Activated T-helper 1 cell treated with anti-CD3 and anti-CD28 coated beads, Interleukin-12 subunit alpha, Interleukin-12 subunit beta, Interleukin-2, Interleukin-4 antibody, amounts not matched to agents 30 ng/mL and 10 ng/mL and 1 ng/mL, durations not matched to agents 14 hours and 24 hours and 36 hours (primary cell): ENCODE measurements at regions of chr9 and their contacts with region 1.

Region 1: GRCh38 chr9:96854073-96854876 is at the start of gene ZNF782:
- DNase-seq: peak; percentile 81
- H3K4me3 Mint-ChIP-seq: peak within 1 kb of the TSS; percentile 100
- H3K27ac Mint-ChIP-seq: peak within 1 kb of the TSS; percentile 99
- H3K4me1 Mint-ChIP-seq: peaks cover 43% of the 10 kb centered on the region
- H3K27me3 Mint-ChIP-seq: peaks cover 21% of the 10 kb centered on the region
- total RNA-seq, gene ZNF782: 3.8 and 4.4 TPM in 2 replicates

Region 2: GRCh38 chr9:96418074-96418809 is 436.0 kb before region 1 on chr9 and contains the start of gene ZNF367:
- intact Hi-C with region 1: loop called (anchors 2 kb)
- DNase-seq: peak; percentile 93
- H3K4me3 Mint-ChIP-seq: peak within 1 kb of the TSS; percentile 94
- H3K27ac Mint-ChIP-seq: peak within 1 kb of the TSS; percentile 95
- H3K4me1 Mint-ChIP-seq: peaks cover 43% of the 10 kb centered on the region
- H3K27me3 Mint-ChIP-seq: no peaks in the 10 kb centered on the region
- total RNA-seq, gene ZNF367: 21.8 and 22.0 TPM in 2 replicates

Region 3: DNA sequence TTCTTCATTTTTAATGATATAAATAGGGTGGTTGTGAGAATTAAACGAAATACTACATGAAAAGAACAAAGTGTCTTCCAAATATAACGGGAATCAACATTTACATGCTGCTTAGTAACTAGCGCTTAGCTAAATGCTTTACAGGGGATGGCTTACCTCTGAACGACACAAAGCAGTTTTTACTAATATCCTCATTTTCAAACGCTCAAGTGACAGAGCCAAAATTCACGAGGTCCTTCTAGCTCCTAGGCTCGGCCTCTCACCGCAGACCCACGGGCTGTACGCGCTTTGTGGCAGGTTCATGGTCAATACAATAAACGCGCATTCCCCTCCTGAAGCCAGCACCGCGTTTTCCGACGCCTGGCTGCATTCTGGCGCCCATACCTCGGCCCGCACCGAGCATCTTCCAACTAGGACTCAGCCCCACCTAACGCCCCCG is 76.8 kb before region 1 on chr9:
- intact Hi-C with region 1: loop called (anchors 1 kb)
- DNase-seq: no peak
- H3K4me3 Mint-ChIP-seq: peak overlapping the region; percentile 100
- H3K27ac Mint-ChIP-seq: peak overlapping the region; percentile 93
- H3K4me1 Mint-ChIP-seq: peaks cover 19% of the 10 kb centered on the region
- H3K27me3 Mint-ChIP-seq: peaks cover 2% of the 10 kb centered on the region

Region 4: DNA sequence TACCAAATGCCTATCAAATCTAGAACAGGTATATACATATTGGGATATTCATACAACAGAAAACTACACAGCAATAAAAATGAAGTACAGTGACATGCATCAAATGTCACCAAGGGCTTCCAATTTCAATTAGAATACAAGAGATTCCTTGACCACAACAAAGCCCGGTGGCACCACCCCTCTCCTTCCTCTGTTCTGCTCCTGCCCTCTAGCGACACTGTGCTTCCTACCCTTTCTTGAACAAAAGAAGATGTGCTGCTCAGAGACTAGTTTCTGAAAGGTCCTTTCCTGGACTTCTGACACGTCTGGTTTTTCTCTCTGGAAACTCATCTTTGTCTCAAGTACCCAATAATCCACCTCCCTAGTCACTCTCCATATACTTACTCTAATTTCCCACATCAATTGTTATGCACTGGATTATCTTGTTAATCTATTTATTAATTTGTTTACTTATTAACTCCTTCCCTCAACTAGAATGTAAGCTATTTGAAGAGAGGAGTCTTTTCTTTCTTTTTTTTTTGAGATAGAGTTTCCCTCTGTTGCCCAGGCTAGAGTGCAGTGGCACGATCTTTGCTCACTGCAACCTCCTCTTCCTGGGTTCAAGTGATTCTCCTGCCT is 255.0 kb after region 1 on chr9:
- intact Hi-C with region 1: loop called (anchors 1 kb)
- DNase-seq: peak; percentile 8
- H3K4me3 Mint-ChIP-seq: no peak overlapping the region
- H3K27ac Mint-ChIP-seq: no peak overlapping the region
- H3K4me1 Mint-ChIP-seq: no peaks in the 10 kb centered on the region
- H3K27me3 Mint-ChIP-seq: peaks cover 4% of the 10 kb centered on the region

Region 5: DNA sequence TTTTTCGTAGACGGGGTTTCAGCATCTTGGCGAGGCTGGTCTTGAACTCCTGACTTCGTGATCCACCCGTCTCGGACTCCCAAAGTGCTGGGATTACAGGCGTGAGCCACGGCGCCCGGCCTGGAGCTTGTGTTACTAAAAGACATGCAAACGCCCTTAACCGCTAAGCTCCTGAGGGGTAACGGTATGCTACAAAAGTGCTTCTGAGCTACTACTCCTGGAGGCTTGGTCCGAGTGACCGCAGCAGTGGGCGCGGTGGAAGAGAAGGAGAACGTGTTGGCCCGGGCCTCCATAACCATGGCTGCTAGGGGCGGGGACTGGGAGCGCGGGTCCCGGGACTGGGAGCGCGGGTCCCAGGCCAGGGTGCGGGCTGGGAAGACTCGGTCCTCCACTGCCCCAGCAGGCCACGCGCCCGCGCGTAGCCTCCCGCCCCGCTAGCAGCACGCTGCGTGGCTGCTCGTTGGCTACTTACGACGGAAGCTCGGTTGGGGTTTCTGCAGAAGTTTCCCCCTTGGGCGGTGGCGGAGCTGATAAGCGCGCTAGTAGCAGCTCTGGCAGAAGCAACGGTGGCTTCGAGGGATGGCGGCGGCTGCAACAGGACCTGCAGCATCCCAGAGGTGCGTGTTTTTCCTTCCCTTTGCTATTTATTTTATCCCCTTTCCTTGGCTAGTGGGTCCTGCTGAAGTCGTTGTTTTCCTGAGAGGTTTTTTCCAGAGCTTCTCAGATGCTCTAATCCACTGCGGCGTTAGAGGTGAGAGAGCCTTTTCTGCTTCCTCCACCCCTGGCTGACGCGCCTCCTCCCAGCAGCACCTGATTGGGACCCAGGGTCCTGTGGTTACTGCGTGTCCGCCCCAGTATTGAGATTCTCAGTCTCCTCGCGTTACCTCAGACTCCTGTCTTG is 383.9 kb after region 1 on chr9:
- intact Hi-C with region 1: loop called (anchors 1 kb)
- DNase-seq: peak; percentile 67
- H3K4me3 Mint-ChIP-seq: peak overlapping the region; percentile 87
- H3K27ac Mint-ChIP-seq: peak overlapping the region; percentile 92
- H3K4me1 Mint-ChIP-seq: peaks cover 18% of the 10 kb centered on the region
- H3K27me3 Mint-ChIP-seq: peaks cover 17% of the 10 kb centered on the region

Region 6: DNA sequence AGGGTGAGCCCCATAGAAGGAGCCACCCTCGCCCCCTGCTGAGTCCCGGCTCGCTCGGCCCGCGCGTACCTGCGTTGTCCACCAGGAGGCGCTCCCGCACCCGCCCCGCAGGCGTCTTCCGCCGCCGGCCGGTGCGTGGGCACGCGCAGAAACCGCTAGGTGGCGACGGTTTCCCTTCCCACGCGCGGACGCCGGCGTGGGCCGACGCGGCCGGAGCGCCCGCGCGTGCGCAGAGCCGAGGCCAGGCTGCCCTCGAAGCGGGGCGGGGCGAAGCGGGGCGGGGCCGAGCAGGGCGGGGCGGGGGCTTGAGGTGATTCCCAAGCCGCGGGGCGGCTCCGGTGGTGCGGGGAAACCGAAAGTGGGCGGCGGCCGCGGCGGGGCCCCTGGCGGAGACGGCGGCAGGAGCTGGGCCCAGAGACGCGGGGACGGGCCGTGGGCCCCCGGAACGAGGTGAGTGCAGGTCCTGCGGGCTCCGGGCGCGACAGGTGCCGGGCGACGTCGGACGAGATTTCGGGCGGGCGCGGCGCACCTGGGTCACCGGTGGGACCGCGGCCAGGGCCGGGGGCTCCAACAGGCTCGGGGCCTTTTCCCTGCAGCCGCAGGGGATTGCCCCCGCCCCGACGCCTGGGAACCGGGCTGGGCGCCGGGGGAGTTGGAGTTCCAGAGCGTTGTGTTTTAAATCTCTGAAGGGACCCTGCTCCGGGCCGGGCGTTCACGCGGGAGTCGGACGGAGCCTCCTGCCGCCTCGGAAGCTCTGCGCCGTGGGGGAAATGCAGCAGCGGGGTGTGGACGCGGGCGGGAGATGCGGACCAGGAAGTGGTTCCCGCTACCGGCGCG is 557.7 kb after region 1 on chr9 and contains the start of gene TDRD7:
- intact Hi-C with region 1: loop called (anchors 2 kb)
- DNase-seq: peak; percentile 87
- H3K4me3 Mint-ChIP-seq: peak within 1 kb of the TSS; percentile 84
- H3K27ac Mint-ChIP-seq: peak within 1 kb of the TSS; percentile 61
- H3K4me1 Mint-ChIP-seq: peaks cover 35% of the 10 kb centered on the region
- H3K27me3 Mint-ChIP-seq: peaks cover 34% of the 10 kb centered on the region
- total RNA-seq, gene TDRD7: 4.7 TPM in 2 replicates

Region 7: DNA sequence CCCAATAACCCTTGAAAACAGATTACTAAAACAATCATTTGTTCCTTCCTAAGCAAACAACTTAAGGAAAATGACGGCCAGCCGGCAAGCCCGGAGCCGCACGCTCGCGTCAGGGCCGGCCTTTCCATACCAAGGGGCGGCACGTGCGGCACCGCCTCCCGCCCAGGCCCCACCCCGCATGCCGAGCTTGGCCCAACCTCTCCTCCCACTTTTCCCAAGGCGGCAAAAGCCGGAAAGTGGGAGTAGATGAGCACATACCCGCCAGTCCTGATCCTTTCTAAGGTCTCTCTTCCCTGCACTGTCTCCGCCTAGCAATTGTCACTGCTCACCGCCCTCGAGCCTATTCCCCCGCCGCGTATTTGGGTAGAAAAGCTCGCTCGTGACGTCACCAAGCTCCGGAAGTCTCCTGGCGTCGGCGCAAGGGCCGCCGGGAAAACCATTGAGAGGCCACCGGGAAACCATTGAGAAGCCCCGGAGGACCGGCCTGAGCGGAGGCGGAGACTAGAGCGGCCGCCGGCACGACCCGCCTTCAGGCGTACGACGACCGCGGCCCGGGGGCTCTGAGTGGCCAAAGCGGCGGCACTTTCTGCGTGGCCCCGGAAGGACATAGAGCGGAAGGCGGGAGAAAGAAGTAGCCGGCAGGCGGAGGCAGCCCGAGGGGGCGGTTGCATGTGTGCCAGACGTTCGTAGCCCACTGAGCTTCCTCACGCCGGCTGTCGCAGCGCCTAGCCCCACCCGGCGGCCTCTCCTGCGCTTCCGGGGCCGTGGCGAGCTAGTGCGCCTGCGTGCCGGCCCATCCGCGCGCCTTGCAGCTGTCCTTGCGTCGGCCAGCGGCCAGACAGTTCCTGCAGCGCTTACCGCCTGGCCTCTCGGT is 778.9 kb after region 1 on chr9 and contains the starts of genes NCBP1 and TSTD2:
- intact Hi-C with region 1: loop called (anchors 1 kb)
- DNase-seq: peak; percentile 95
- H3K4me3 Mint-ChIP-seq: peak within 1 kb of the TSS; percentile 94
- H3K27ac Mint-ChIP-seq: peak within 1 kb of the TSS; percentile 99
- H3K4me1 Mint-ChIP-seq: peaks cover 48% of the 10 kb centered on the region
- H3K27me3 Mint-ChIP-seq: no peaks in the 10 kb centered on the region
- total RNA-seq, gene NCBP1: 43.2 and 50.5 TPM in 2 replicates
- total RNA-seq, gene TSTD2: 16.4 and 19.2 TPM in 2 replicates